Caco-2 (cell line): ENCODE measurements at regions of chr5 and their contacts with region 1.

Region 1: GRCh38 chr5:13987843-13988464 is 43.5 kb upstream of the DNAH5 start:
- DNase-seq: peak; percentile 52 to 68
- H3K4me3 ChIP-seq: no peak overlapping the region
- H3K4me3 Mint-ChIP-seq: no peak overlapping the region
- H3K27ac Mint-ChIP-seq: no peak overlapping the region
- H3K4me1 ChIP-seq: no peaks in the 10 kb centered on the region
- H3K4me1 Mint-ChIP-seq: no peaks in the 10 kb centered on the region
- H3K27me3 ChIP-seq: no peaks in the 10 kb centered on the region; the same call in 1 of the 2 replicates
- H3K27me3 Mint-ChIP-seq: no peaks in the 10 kb centered on the region
- CTCF ChIP-seq: peak; percentile 75 to 82

Region 2: DNA sequence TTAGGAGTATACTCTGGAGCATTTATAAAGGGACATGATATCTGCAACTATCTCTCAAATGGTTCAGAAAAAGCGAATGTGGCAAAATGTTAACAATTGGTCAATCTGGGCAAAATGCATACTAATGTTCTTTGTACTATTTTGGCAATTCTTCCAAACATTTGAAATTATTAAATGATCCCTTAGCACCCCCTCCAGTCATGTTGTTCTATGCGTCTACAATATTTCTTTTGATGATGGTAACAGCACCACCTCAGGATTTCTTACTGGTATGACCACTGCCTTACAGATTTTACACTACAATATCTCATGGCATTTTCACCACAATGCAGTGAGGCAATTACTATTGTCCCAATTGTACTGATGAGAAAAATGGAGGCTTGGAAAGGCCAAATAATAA is 102.3 kb after region 1 on chr5:
- CTCF ChIA-PET with region 1: no interaction called
- POLR2A ChIA-PET with region 1: no interaction called
- intact Hi-C with region 1: loop called (anchors 5 kb)
- DNase-seq: no peak
- H3K4me3 ChIP-seq: no peak overlapping the region
- H3K4me3 Mint-ChIP-seq: no peak overlapping the region
- H3K27ac Mint-ChIP-seq: no peak overlapping the region
- H3K4me1 ChIP-seq: no peaks in the 10 kb centered on the region
- H3K4me1 Mint-ChIP-seq: no peaks in the 10 kb centered on the region
- H3K27me3 ChIP-seq: no peaks in the 10 kb centered on the region
- H3K27me3 Mint-ChIP-seq: peaks cover 10% of the 10 kb centered on the region
- CTCF ChIP-seq: no peak

Region 3: GRCh38 chr5:14142827-14143548 is 155.0 kb after region 1 on chr5 and contains the start of gene TRIO:
- CTCF ChIA-PET with region 1: no interaction called
- POLR2A ChIA-PET with region 1: interaction called, 6 read pairs
- intact Hi-C with region 1: loop called (anchors 5 kb)
- DNase-seq: peak; percentile 93 to 96
- H3K4me3 ChIP-seq: peak within 1 kb of the TSS; percentile 92
- H3K4me3 Mint-ChIP-seq: peak within 1 kb of the TSS; percentile 84
- H3K27ac Mint-ChIP-seq: peak within 1 kb of the TSS; percentile 81
- H3K4me1 ChIP-seq: no peaks in the 10 kb centered on the region
- H3K4me1 Mint-ChIP-seq: no peaks in the 10 kb centered on the region
- H3K27me3 ChIP-seq: no peaks in the 10 kb centered on the region
- H3K27me3 Mint-ChIP-seq: peaks cover 3% of the 10 kb centered on the region
- CTCF ChIP-seq: peak; percentile 44 to 69
- total RNA-seq, gene TRIO: 92.0 and 98.9 TPM in 2 replicates

Region 4: GRCh38 chr5:14270209-14270702 is 282.3 kb after region 1 on chr5:
- CTCF ChIA-PET with region 1: interaction called, 6 read pairs
- POLR2A ChIA-PET with region 1: no interaction called
- intact Hi-C with region 1: loop called (anchors 1 kb)
- DNase-seq: peak; percentile 57 to 73
- H3K4me3 ChIP-seq: no peak overlapping the region
- H3K4me3 Mint-ChIP-seq: no peak overlapping the region
- H3K27ac Mint-ChIP-seq: no peak overlapping the region
- H3K4me1 ChIP-seq: peaks cover 51% of the 10 kb centered on the region
- H3K4me1 Mint-ChIP-seq: peaks cover 53% of the 10 kb centered on the region
- H3K27me3 ChIP-seq: no peaks in the 10 kb centered on the region
- H3K27me3 Mint-ChIP-seq: no peaks in the 10 kb centered on the region
- CTCF ChIP-seq: peak; percentile 73 to 83

Region 5: DNA sequence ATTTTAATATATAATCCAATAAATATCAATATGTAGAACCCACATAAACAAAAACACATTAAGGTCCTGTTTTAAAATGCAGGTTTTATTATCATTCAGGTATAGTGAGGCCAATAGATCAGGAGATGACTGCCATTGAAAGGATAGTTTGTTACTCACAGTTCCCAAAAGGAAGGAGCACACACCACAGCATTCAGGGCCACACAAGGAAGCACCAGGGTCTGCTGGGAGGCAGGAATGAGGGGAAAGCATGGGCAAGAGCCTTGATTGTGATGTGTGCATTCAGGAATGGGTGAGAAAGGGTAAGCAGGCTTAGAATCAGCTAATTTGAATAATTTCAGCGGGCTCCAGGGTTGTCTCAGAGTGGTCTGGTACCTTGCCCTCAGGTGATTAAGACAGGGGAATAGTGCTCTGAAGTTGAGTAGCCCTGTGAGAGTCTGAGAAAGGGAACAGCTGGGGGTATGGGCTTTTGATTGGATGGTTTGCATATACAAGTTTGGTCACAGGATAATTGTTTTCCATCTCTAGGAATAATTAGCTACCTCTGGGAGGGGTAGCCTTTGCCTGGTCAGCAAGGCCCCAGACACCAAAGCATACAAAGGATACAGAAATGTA is 656.8 kb after region 1 on chr5:
- CTCF ChIA-PET with region 1: no interaction called
- POLR2A ChIA-PET with region 1: no interaction called
- intact Hi-C with region 1: loop called (anchors 5 kb)
- DNase-seq: no peak
- H3K4me3 ChIP-seq: no peak overlapping the region
- H3K4me3 Mint-ChIP-seq: no peak overlapping the region
- H3K27ac Mint-ChIP-seq: no peak overlapping the region
- H3K4me1 ChIP-seq: no peaks in the 10 kb centered on the region
- H3K4me1 Mint-ChIP-seq: no peaks in the 10 kb centered on the region
- H3K27me3 ChIP-seq: no peaks in the 10 kb centered on the region
- H3K27me3 Mint-ChIP-seq: peaks cover 12% of the 10 kb centered on the region
- CTCF ChIP-seq: no peak